IMR-90 (cell line): ENCODE measurements at regions of chr3 and their contacts with region 1.

Region 1: GRCh38 chr3:167380004-167380689 is at the start of gene ZBBX:
- DNase-seq: peak; percentile 59
- ATAC-seq: peak; percentile 99
- H3K4me3 ChIP-seq: peak within 1 kb of the TSS; percentile 50
- H3K27ac ChIP-seq: no peak within 1 kb of the TSS
- H3K4me1 ChIP-seq: no peaks in the 10 kb centered on the region
- H3K27me3 ChIP-seq: no peaks in the 10 kb centered on the region
- CTCF ChIP-seq: peak; percentile 93
- POLR2A ChIP-seq: no peak
- RAD21 ChIP-seq: peak; percentile 72
- total RNA-seq, gene ZBBX: not detected in 2 replicates

Region 2: DNA sequence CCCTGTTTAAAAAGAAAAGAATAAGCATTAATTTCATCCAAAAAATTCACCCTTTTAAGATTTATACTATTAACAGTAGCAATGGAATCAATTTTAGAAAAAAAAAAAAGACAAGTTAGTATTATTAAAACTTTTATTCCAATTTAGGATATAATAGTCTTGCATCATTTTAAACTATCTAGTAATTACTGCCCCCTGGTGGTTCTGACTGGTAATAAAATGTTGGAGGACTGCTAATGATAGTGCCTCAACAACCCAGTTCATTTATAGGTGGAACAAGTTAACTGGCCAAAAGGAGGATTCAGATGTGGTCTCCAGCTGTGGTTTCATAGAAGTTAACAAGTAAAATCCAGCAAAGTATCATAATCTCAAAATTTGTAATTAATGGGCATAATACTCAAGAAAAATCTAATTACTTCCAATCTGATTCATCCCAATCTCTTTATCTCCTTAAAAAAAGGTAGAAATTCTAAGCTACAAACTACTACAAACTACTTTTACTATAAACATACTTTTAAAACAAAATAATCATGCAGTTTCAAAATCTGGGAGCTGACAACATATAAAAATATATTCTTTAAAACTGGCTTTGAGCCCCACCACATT is 304.3 kb after region 1 on chr3:
- CTCF ChIA-PET with region 1: interaction called, 3 read pairs
- POLR2A ChIA-PET with region 1: no interaction called
- dilution Hi-C with region 1: no loop called
- in situ Hi-C with region 1: no loop called
- intact Hi-C with region 1: loop called (anchors 2 kb)
- DNase-seq: peak; percentile 58
- ATAC-seq: peak; percentile 65; the same call in 1 of the 2 replicates
- H3K4me3 ChIP-seq: no peak overlapping the region
- H3K27ac ChIP-seq: no peak overlapping the region
- H3K4me1 ChIP-seq: no peaks in the 10 kb centered on the region
- H3K27me3 ChIP-seq: no peaks in the 10 kb centered on the region
- CTCF ChIP-seq: peak; percentile 58
- POLR2A ChIP-seq: no peak
- RAD21 ChIP-seq: peak; percentile 18; the same call in 1 of the 2 replicates

Region 3: DNA sequence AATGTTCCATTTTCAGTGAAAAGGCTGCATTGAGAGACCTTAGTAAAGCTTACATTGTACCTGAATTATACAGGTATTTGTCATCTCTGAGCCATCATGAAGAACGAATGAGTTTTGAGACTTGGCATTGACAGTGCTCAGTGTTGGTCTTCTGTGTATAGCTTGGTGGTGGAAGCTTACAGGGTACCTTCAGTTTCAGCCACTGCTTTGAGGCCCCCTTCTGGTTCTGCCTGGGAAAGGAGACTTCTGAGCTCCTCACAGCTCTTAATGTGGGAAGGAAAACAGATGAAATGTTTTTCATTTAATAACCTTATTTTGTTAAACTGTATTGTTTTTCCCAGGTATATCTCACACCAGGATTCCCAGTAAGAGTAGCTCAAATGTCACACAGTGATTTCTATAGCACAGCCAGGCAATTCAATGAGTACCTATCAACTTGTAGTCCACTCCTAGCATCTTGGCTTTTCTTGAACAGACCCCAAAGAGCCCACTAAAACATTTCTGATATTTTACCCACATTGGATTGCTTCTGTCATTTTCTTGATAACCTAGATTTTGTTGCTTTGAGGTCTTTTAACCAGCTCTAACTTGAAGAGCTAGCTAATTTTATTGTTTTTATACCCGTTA is 360.9 kb after region 1 on chr3:
- CTCF ChIA-PET with region 1: interaction called, 4 read pairs
- POLR2A ChIA-PET with region 1: no interaction called
- dilution Hi-C with region 1: no loop called
- in situ Hi-C with region 1: no loop called
- intact Hi-C with region 1: loop called (anchors 1 kb)
- DNase-seq: peak; percentile 42
- ATAC-seq: peak; percentile 86
- H3K4me3 ChIP-seq: no peak overlapping the region
- H3K27ac ChIP-seq: no peak overlapping the region
- H3K4me1 ChIP-seq: no peaks in the 10 kb centered on the region
- H3K27me3 ChIP-seq: no peaks in the 10 kb centered on the region
- CTCF ChIP-seq: peak; percentile 45
- POLR2A ChIP-seq: no peak
- RAD21 ChIP-seq: peak; percentile 47